ENCODE measurements at regions of chr15 and their contacts with region 1.

Region 1: GRCh38 chr15:67839929-67840748 is at the start of gene RNU6-1:
- DNase-seq: peak; percentile 92
- H3K4me3 Mint-ChIP-seq: peak within 1 kb of the TSS; percentile 86
- H3K27ac Mint-ChIP-seq: peak within 1 kb of the TSS; percentile 93
- H3K4me1 Mint-ChIP-seq: peaks cover 25% of the 10 kb centered on the region
- H3K27me3 Mint-ChIP-seq: peaks cover 35% of the 10 kb centered on the region
- total RNA-seq, gene RNU6-1: not detected in 2 replicates

Region 2: GRCh38 chr15:66700802-66701421 is 1139.2 kb before region 1 on chr15:
- intact Hi-C with region 1: loop called (anchors 5 kb)
- DNase-seq: peak; percentile 81
- H3K4me3 Mint-ChIP-seq: peak overlapping the region; percentile 87
- H3K27ac Mint-ChIP-seq: peak overlapping the region; percentile 59
- H3K4me1 Mint-ChIP-seq: peaks cover 10% of the 10 kb centered on the region
- H3K27me3 Mint-ChIP-seq: peaks cover 21% of the 10 kb centered on the region

Region 3: GRCh38 chr15:67065444-67066093 is 774.6 kb before region 1 on chr15 and contains the start of gene SMAD3:
- intact Hi-C with region 1: loop called (anchors 5 kb)
- DNase-seq: peak; percentile 78
- H3K4me3 Mint-ChIP-seq: peak within 1 kb of the TSS; percentile 81
- H3K27ac Mint-ChIP-seq: peak within 1 kb of the TSS; percentile 87
- H3K4me1 Mint-ChIP-seq: peaks cover 49% of the 10 kb centered on the region
- H3K27me3 Mint-ChIP-seq: peaks cover 20% of the 10 kb centered on the region
- total RNA-seq, gene SMAD3: 25.2 and 28.1 TPM in 2 replicates

Region 4: DNA sequence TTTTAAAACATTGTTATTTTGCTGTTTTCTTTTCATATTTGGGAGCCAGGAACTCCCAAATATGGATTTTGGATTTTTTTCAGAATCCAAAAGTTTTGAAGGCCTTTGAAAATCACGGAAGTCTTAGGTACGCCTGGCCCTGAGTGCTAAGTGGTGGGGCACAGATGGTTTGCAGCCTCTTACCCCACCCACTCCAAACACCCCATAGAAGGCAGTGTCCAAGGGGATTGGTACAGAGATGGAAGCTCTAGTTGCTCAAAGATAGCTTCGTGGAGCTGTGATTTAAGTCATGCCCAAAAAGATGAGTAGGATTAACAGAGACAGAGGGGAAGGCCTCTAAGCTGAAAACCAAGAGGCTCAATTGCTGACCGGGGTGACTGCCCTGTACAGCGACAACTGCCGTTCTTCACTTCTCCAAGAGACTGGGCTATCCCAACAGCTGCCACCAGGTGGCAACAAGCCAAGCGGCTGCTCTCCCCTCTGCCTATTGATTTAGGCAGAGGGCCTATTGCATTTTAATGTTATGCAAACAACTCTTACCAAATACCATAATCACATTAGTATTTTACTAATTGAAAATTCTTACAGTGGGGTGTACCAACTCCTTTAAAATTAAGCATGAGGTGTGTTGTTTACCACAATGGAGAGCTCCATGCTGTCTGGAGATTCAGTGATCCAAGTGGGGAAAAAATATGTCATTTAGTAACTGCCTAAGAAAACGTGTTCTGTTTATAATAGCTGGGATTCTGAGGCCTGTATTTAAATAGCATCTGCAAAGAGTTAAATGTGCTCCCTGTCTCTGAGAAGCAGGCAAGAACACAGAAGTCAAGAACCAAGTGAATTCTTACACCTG is 383.2 kb before region 1 on chr15:
- intact Hi-C with region 1: loop called (anchors 1 kb)
- DNase-seq: peak; percentile 70
- H3K4me3 Mint-ChIP-seq: no peak overlapping the region
- H3K27ac Mint-ChIP-seq: no peak overlapping the region
- H3K4me1 Mint-ChIP-seq: peaks cover 5% of the 10 kb centered on the region
- H3K27me3 Mint-ChIP-seq: peaks cover 24% of the 10 kb centered on the region

Region 5: GRCh38 chr15:67521029-67521811 is 318.9 kb before region 1 on chr15 and contains the start of gene C15orf61:
- intact Hi-C with region 1: loop called (anchors 5 kb)
- DNase-seq: peak; percentile 80
- H3K4me3 Mint-ChIP-seq: peak within 1 kb of the TSS; percentile 90
- H3K27ac Mint-ChIP-seq: peak within 1 kb of the TSS; percentile 85
- H3K4me1 Mint-ChIP-seq: peaks cover 19% of the 10 kb centered on the region
- H3K27me3 Mint-ChIP-seq: no peaks in the 10 kb centered on the region
- total RNA-seq, gene C15orf61: 5.4 and 5.6 TPM in 2 replicates

Region 6: GRCh38 chr15:67976506-67977073 is 136.5 kb after region 1 on chr15:
- intact Hi-C with region 1: no loop called
- DNase-seq: no peak
- H3K4me3 Mint-ChIP-seq: no peak overlapping the region
- H3K27ac Mint-ChIP-seq: no peak overlapping the region
- H3K4me1 Mint-ChIP-seq: no peaks in the 10 kb centered on the region
- H3K27me3 Mint-ChIP-seq: peaks cover 10% of the 10 kb centered on the region

Measured in activated T-helper 2 cell treated with anti-CD3 and anti-CD28 coated beads, Interferon-gamma antibody, Interleukin-2, Interleukin-4, amounts not matched to agents 10 μg/mL and 5 μg/mL and 100 μg/mL, durations not matched to agents 14 hours and 24 hours and 36 hours (primary cell).